GM12878 (cell line): ENCODE measurements at regions of chr9 and their contacts with region 1.

Region 1: GRCh38 chr9:104968025-104968982 is 40.3 kb upstream of the ABCA1 start:
- DNase-seq: no peak
- ATAC-seq: peak; percentile 100
- H3K4me3 ChIP-seq: peak overlapping the region; percentile 63
- H3K27ac ChIP-seq: peak overlapping the region; percentile 52
- H3K4me1 ChIP-seq: peaks cover 4% of the 10 kb centered on the region
- H3K27me3 ChIP-seq: 0 out of 4 replicates have a peak, but pooled peaks cover 0 to 2% of the 10 kb centered on the region in 2 experiments
- CTCF ChIP-seq: no peak
- EP300 ChIP-seq: no peak
- POLR2A ChIP-seq: peak; percentile 40; the same call in 1 of the 2 replicates
- RAD21 ChIP-seq: no peak

Region 2: GRCh38 chr9:104927912-104928740 is 40.2 kb before region 1 on chr9 and contains the start of gene ABCA1:
- CTCF ChIA-PET with region 1: no interaction called
- POLR2A ChIA-PET with region 1: no interaction called
- RAD21 ChIA-PET with region 1: no interaction called
- SMC1A ChIA-PET with region 1: no interaction called
- in situ Hi-C with region 1: no loop called
- intact Hi-C with region 1: loop called (anchors 2 kb)
- DNase-seq: no peak
- ATAC-seq: peak; percentile 60
- H3K4me3 ChIP-seq: peak within 1 kb of the TSS; percentile 71
- H3K27ac ChIP-seq: no peak within 1 kb of the TSS
- H3K4me1 ChIP-seq: peaks cover 7% of the 10 kb centered on the region
- H3K27me3 ChIP-seq: peaks cover 9% of the 10 kb centered on the region in 2 experiments
- CTCF ChIP-seq: no peak
- EP300 ChIP-seq: no peak
- POLR2A ChIP-seq: no peak
- RAD21 ChIP-seq: no peak
- polyA plus RNA-seq, gene ABCA1: 0.09 to 0.29 TPM